Prostate gland (tissue), 2 donors: ENCODE measurements at regions of chr3 and their contacts with region 1.

Region 1: GRCh38 chr3:94004301-94004910 is 24.0 kb downstream of the STX19 start:
- DNase-seq: no peak
- H3K4me3 ChIP-seq: no peak overlapping the region
- H3K27ac ChIP-seq: no peak overlapping the region
- H3K4me1 ChIP-seq: no peaks in the 10 kb centered on the region
- H3K27me3 ChIP-seq: no peaks in the 10 kb centered on the region
- CTCF ChIP-seq: peak; percentile 34 to 83 (median 66)
- POLR2A ChIP-seq: no peak

Region 2: DNA sequence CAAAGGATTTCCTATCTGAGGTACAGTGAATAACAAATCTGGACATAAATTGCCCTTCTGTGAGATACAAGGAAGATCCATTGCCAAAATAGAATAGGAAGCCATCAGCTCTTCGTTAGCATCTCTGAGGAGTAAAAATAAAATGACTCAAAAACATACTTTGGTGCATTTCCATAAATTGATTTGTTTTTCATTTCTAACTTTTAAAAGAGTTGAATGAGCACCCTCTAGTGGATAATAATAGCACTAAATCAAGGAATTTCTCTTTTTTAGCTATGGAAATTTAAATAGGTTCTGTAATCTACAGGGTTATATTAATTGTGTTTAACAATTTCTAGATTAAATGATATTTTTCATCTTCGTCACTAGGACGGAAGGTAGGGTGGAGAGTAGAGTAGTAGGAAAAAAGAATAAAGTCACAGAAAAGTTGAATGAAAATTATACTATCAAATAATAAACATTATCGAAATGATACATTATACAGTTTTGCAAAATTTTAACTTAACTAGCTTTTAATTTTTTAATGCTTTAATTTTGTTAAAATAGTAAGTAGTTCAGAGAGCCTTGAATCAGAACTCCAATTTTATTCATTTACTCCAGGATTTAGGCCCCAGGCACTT is 64.9 kb after region 1 on chr3:
- intact Hi-C with region 1: loop called (anchors 5 kb)
- DNase-seq: no peak
- H3K4me3 ChIP-seq: no peak overlapping the region
- H3K27ac ChIP-seq: no peak overlapping the region
- H3K4me1 ChIP-seq: no peaks in the 10 kb centered on the region
- H3K27me3 ChIP-seq: no peaks in the 10 kb centered on the region
- CTCF ChIP-seq: peak; percentile 37 to 56 (median 52)
- POLR2A ChIP-seq: no peak